CD8-positive, alpha-beta T cell (primary cell): ENCODE measurements at regions of chr1 and their contacts with region 1.

Region 1: GRCh38 chr1:46718727-46719622 is at the start of gene EFCAB14:
- DNase-seq: peak; percentile 98 to 100 (median 99)
- ATAC-seq: peak; percentile 99
- H3K4me3 ChIP-seq: peak within 1 kb of the TSS; percentile 86 to 90
- H3K4me3 Mint-ChIP-seq: peak within 1 kb of the TSS; percentile 89
- H3K27ac ChIP-seq: peak within 1 kb of the TSS; percentile 77 to 81
- H3K27ac Mint-ChIP-seq: peak within 1 kb of the TSS; percentile 91
- H3K4me1 ChIP-seq: peaks cover 28% of the 10 kb centered on the region
- H3K4me1 Mint-ChIP-seq: peaks cover 39% of the 10 kb centered on the region
- H3K27me3 ChIP-seq: no peaks in the 10 kb centered on the region
- H3K27me3 Mint-ChIP-seq: no peaks in the 10 kb centered on the region
- CTCF ChIP-seq: no peak
- total RNA-seq, gene EFCAB14: 33.1 to 36.9 TPM

Region 2: DNA sequence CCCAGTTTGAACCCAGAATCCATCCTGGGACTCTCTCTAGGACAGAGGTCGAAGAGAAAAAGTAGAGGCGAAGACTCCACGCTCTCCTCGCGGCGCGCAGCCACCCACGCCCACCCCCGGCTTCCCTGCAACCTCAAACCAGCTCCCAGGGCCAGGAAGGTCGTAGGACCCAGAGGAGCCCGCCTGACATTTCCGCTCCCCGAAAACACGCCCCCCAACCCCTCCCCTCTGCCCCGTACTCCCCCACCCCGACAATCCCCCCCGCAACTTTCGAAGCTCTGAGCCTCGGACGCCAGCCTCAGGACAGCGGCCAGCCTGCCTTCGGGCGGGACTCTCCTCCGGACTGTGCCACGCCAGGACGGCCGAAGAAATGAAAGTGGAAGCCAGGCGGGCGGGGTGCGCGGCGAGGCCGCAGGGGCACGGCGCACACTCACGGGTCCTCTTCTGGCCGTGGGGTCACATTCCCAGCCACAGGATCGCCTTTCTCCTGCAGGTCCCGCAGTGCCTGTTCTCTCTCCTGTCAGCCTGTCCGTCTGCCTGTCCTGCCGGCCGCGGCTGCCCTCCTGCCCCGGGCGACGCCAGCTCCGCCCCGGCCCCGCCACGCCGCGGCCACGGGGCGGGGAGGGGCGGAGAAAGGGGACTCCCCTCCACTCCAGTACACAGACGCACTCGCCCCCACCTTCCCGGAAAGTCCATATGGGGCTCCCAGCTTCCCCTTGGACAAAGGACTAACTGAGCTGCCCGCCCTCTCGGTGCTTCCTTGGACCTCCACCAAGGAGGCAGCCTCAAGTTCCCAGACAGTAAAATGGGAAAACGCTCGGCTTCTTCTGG is 102.5 kb before region 1 on chr1 and contains the start of gene MOB3C:
- CTCF ChIA-PET with region 1: interaction called, 3 read pairs
- POLR2A ChIA-PET with region 1: interaction called, 4 read pairs
- intact Hi-C with region 1: loop called (anchors 1 kb)
- DNase-seq: peak in 8 of 9 experiments; percentile 49 to 82 (median 73)
- ATAC-seq: peak; percentile 83
- H3K4me3 ChIP-seq: peak within 1 kb of the TSS; percentile 91 to 96
- H3K4me3 Mint-ChIP-seq: peak within 1 kb of the TSS; percentile 90
- H3K27ac ChIP-seq: peak within 1 kb of the TSS; percentile 88 to 89
- H3K27ac Mint-ChIP-seq: peak within 1 kb of the TSS; percentile 92
- H3K4me1 ChIP-seq: peaks cover 47% of the 10 kb centered on the region
- H3K4me1 Mint-ChIP-seq: peaks cover 51% of the 10 kb centered on the region
- H3K27me3 ChIP-seq: no peaks in the 10 kb centered on the region
- H3K27me3 Mint-ChIP-seq: no peaks in the 10 kb centered on the region
- CTCF ChIP-seq: no peak
- total RNA-seq, gene MOB3C: 8.0 to 8.6 TPM

Region 3: DNA sequence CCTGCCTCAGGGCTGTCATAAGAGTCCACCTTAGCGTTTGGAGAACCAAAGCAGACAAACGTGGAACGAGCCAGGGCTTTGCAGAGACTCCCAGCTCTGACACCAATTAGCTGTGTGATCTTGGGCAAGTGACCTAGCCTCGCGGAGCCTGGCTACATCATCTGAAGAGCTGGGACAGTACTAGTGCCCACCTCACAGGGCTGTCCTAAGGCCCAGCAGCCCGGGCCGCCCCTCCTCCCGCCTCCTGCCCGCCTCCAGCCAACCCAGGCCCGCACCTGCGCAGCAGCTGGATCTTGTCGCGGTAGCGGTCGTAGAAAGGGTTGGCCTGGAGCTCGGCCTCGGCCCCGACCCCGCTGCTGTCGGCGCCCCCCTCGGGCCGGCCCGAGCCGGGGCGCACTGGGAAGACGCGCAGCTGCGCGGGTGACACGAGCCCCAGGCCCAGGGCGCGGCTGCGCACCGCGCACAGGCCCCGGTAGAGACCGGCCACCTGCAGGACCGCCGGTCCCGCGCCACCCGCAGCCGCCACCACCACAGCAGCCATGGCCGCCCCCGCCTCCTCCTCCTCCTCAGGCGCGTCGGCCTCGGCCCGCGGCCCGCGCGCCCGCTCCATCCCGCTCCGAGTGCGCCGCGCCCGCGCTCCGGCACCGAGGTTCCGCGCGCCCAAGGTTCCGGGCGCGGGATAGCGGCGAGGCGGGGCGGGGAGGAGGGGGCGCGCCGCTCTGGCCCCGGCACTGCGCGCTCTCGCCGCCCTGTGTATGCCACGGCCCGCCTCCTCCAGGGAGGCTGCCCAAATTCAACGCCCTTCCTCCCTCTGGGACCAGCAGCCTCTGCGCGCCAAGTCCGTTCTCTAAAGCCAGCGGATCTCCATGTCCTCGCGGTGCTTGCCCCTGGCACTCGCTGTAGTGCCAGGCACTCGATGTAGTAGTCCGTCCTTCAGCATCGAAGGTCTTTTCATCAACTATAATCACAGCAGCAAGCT is 50.9 kb before region 1 on chr1 and contains the start of gene ATPAF1:
- CTCF ChIA-PET with region 1: no interaction called
- POLR2A ChIA-PET with region 1: interaction called, 3 read pairs
- intact Hi-C with region 1: loop called (anchors 1 kb)
- DNase-seq: peak; percentile 15 to 79 (median 49)
- ATAC-seq: peak; percentile 91
- H3K4me3 ChIP-seq: peak within 1 kb of the TSS; percentile 52 to 77
- H3K4me3 Mint-ChIP-seq: no peak within 1 kb of the TSS
- H3K27ac ChIP-seq: peak within 1 kb of the TSS; percentile 49 to 66
- H3K27ac Mint-ChIP-seq: peak within 1 kb of the TSS; percentile 69
- H3K4me1 ChIP-seq: peaks cover 22% of the 10 kb centered on the region
- H3K4me1 Mint-ChIP-seq: peaks cover 29% of the 10 kb centered on the region
- H3K27me3 ChIP-seq: no peaks in the 10 kb centered on the region
- H3K27me3 Mint-ChIP-seq: no peaks in the 10 kb centered on the region
- CTCF ChIP-seq: no peak
- total RNA-seq, gene ATPAF1: 8.3 to 10.5 TPM

Region 4: GRCh38 chr1:47313915-47314664 is 595.1 kb after region 1 on chr1 and contains the start of gene STIL:
- CTCF ChIA-PET with region 1: no interaction called
- POLR2A ChIA-PET with region 1: no interaction called
- intact Hi-C with region 1: loop called in 1 of 2 experiments (anchors 1 kb)
- DNase-seq: peak; percentile 91 to 99 (median 96)
- ATAC-seq: peak; percentile 96
- H3K4me3 ChIP-seq: peak within 1 kb of the TSS; percentile 54 to 81
- H3K4me3 Mint-ChIP-seq: peak within 1 kb of the TSS; percentile 95
- H3K27ac ChIP-seq: peak within 1 kb of the TSS; percentile 56 to 83
- H3K27ac Mint-ChIP-seq: peak within 1 kb of the TSS; percentile 95
- H3K4me1 ChIP-seq: peaks cover 3% of the 10 kb centered on the region
- H3K4me1 Mint-ChIP-seq: peaks cover 13% of the 10 kb centered on the region
- H3K27me3 ChIP-seq: no peaks in the 10 kb centered on the region
- H3K27me3 Mint-ChIP-seq: no peaks in the 10 kb centered on the region
- CTCF ChIP-seq: no peak
- total RNA-seq, gene STIL: 1.4 to 1.8 TPM